MCF 10A (cell line): ENCODE measurements at regions of chr4 and their contacts with region 1.

Region 1: GRCh38 chr4:150209140-150209829 is 131.0 kb downstream of the DCLK2 start:
- DNase-seq: peak; percentile 73
- H3K4me3 Mint-ChIP-seq: no peak overlapping the region
- H3K27ac Mint-ChIP-seq: no peak overlapping the region
- H3K4me1 Mint-ChIP-seq: peaks cover 6% of the 10 kb centered on the region
- H3K27me3 Mint-ChIP-seq: no peaks in the 10 kb centered on the region
- CTCF ChIP-seq: peak; percentile 58

Region 2: GRCh38 chr4:149999485-150000074 is 209.7 kb before region 1 on chr4:
- CTCF ChIA-PET with region 1: interaction called, 223 read pairs
- POLR2A ChIA-PET with region 1: no interaction called
- intact Hi-C with region 1: loop called (anchors 1 kb)
- DNase-seq: peak; percentile 69
- H3K4me3 Mint-ChIP-seq: no peak overlapping the region
- H3K27ac Mint-ChIP-seq: no peak overlapping the region
- H3K4me1 Mint-ChIP-seq: peaks cover 22% of the 10 kb centered on the region
- H3K27me3 Mint-ChIP-seq: no peaks in the 10 kb centered on the region
- CTCF ChIP-seq: peak; percentile 63

Region 3: GRCh38 chr4:150104404-150105027 is 104.8 kb before region 1 on chr4:
- CTCF ChIA-PET with region 1: no interaction called
- POLR2A ChIA-PET with region 1: no interaction called
- intact Hi-C with region 1: loop called (anchors 1 kb)
- DNase-seq: no peak
- H3K4me3 Mint-ChIP-seq: no peak overlapping the region
- H3K27ac Mint-ChIP-seq: no peak overlapping the region
- H3K4me1 Mint-ChIP-seq: no peaks in the 10 kb centered on the region
- H3K27me3 Mint-ChIP-seq: no peaks in the 10 kb centered on the region
- CTCF ChIP-seq: no peak

Region 4: DNA sequence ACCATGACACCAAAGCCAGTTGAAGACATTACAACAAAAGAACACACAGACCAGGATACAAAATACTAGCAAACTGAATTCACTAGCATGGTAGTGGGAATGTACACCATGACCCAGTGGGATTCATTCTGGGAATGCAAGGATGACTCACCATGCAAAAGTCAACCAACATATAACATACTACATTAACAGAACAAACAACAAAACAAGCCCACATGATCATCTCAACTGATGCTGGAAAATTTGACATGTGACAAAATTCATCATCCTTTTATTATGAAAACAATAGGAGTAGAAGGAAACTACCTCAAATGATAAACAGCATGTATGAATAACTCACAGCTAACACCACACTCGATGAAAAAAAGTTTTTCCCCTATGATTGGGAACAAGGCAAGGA is 59.2 kb after region 1 on chr4:
- CTCF ChIA-PET with region 1: no interaction called
- POLR2A ChIA-PET with region 1: no interaction called
- intact Hi-C with region 1: no loop called
- DNase-seq: peak; percentile 18
- H3K4me3 Mint-ChIP-seq: no peak overlapping the region
- H3K27ac Mint-ChIP-seq: no peak overlapping the region
- H3K4me1 Mint-ChIP-seq: no peaks in the 10 kb centered on the region
- H3K27me3 Mint-ChIP-seq: no peaks in the 10 kb centered on the region
- CTCF ChIP-seq: no peak